ENCODE measurements at regions of chr11 and their contacts with region 1.

Region 1: GRCh38 chr11:88543902-88544655 is 206.5 kb upstream of the CTSC start:
- DNase-seq: peak; percentile 51 to 85 (median 74)
- ATAC-seq: peak; percentile 94
- H3K4me3 ChIP-seq: no peak overlapping the region
- H3K4me3 Mint-ChIP-seq: no peak overlapping the region
- H3K27ac ChIP-seq: no peak overlapping the region
- H3K27ac Mint-ChIP-seq: no peak overlapping the region
- H3K4me1 ChIP-seq: no peaks in the 10 kb centered on the region
- H3K4me1 Mint-ChIP-seq: peaks cover 2% of the 10 kb centered on the region
- H3K27me3 ChIP-seq: no peaks in the 10 kb centered on the region
- H3K27me3 Mint-ChIP-seq: no peaks in the 10 kb centered on the region
- CTCF ChIP-seq: peak; percentile 93

Region 2: DNA sequence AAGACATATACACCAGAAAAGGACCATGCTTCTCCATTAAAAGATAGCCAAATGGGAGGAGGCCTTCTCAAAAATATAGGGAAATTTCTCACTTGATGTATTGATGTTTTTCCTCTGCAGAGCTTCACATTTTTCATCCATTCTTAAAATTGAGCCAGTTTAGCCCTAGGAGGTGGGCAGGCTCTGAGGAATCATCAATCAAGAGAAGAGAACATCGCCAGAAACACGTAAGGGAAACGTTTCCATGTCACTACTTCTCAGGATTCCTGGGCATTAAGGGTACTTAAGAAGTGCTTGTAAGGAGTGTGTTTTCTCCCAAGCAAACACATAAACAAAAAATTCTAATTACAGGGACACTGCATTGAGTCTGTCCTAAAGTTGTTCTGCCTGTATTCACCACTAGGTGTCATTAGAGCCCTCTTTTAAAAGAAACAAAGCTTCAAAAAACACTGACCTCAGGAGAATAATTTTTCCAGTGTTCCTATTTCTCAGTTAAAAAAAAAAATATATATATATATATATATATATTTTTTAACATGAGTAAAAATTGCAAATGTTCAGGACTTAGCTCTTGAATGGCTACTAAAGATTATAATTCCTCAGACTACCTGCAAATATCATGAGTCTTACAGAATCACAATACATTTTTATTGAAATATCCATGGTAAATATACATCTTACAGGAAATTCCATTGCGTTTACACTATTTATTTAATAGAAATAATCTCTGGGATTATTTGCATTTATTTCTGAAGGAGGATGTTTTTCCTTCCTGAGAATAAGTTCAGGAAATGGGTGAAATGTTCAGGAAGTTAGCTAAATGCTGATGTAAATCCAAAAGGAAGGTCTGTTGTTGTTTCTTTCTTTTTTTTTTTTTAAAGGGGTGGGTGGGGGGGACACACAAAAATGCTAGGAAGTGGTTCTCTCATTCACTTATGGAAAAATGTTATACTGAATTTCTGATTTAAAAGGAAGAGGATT is 1604.9 kb before region 1 on chr11:
- CTCF ChIA-PET with region 1: no interaction called
- POLR2A ChIA-PET with region 1: no interaction called
- intact Hi-C with region 1: loop called in 1 of 2 experiments (anchors 10 kb)
- DNase-seq: peak in 2 of 9 experiments; percentile 53 to 60
- ATAC-seq: peak; percentile 52
- H3K4me3 ChIP-seq: no peak overlapping the region
- H3K4me3 Mint-ChIP-seq: no peak overlapping the region
- H3K27ac ChIP-seq: no peak overlapping the region
- H3K27ac Mint-ChIP-seq: no peak overlapping the region
- H3K4me1 ChIP-seq: no peaks in the 10 kb centered on the region
- H3K4me1 Mint-ChIP-seq: no peaks in the 10 kb centered on the region
- H3K27me3 ChIP-seq: no peaks in the 10 kb centered on the region
- H3K27me3 Mint-ChIP-seq: peaks cover 6% of the 10 kb centered on the region
- CTCF ChIP-seq: peak; percentile 72

Region 3: DNA sequence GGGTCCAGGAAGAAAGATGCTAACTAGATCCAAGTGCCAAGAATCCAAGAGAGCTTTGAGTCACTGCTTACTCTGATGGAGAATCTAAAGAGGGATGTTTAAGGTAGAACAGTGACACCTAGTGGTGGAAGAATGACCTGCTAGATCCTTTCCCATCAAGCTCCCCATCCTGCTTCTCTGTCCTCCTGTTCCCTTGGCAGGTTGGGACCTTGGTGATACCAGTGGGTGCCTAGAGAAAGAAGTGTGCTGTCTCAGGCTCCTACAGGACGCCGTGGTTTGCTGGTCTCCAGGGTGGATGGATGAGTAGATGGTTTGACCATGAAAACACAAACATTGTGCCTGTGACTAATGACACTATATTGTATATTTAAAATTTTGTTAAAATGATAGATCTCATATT is 1122.7 kb before region 1 on chr11:
- CTCF ChIA-PET with region 1: no interaction called
- POLR2A ChIA-PET with region 1: no interaction called
- intact Hi-C with region 1: loop called (anchors 5 to 10 kb)
- DNase-seq: peak in 3 of 9 experiments; percentile 23 to 69 (median 59)
- ATAC-seq: no peak
- H3K4me3 ChIP-seq: no peak overlapping the region
- H3K4me3 Mint-ChIP-seq: no peak overlapping the region
- H3K27ac ChIP-seq: no peak overlapping the region
- H3K27ac Mint-ChIP-seq: no peak overlapping the region
- H3K4me1 ChIP-seq: no peaks in the 10 kb centered on the region
- H3K4me1 Mint-ChIP-seq: no peaks in the 10 kb centered on the region
- H3K27me3 ChIP-seq: no peaks in the 10 kb centered on the region
- H3K27me3 Mint-ChIP-seq: peaks cover 2% of the 10 kb centered on the region
- CTCF ChIP-seq: peak; percentile 65

Region 4: DNA sequence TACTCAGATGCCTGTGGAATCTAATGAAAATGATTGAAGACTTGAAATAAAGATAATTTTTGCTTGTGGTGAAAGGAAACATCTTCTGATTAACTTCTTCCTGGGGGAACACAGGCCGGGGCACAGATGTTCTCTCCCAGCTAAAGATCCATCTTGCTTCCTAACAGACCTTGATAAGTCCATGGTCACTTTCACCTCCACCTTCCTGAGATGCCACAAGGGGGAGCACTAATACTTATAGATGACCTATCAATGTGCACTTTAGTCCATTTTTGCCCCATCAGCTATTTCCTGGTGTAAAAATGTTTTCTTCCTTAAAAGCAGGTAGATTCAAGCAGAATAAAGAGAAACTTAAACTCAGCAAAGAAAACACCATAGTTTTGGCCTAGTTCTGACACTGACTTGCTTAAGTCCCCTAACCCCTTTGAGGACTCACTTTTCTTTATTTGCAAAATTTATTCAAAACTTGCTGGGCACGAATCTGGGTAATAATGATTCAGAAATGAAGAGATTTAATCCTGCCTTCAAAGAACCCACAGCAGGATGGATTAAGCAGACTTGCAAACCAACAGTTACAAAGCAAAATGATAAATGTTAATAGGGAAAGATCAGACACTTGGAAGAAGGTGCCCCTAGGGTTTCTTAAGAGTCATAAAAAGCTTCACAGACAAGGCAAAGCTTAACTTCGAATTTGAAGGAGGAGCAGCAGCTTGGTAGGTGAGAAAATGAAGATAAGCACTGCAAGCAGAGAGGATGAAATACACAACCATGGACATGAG is 527.5 kb before region 1 on chr11:
- CTCF ChIA-PET with region 1: interaction called, 68 read pairs
- POLR2A ChIA-PET with region 1: no interaction called
- intact Hi-C with region 1: loop called (anchors 1 kb)
- DNase-seq: peak in 8 of 9 experiments; percentile 17 to 73 (median 52)
- ATAC-seq: peak; percentile 40
- H3K4me3 ChIP-seq: no peak overlapping the region
- H3K4me3 Mint-ChIP-seq: no peak overlapping the region
- H3K27ac ChIP-seq: no peak overlapping the region
- H3K27ac Mint-ChIP-seq: no peak overlapping the region
- H3K4me1 ChIP-seq: no peaks in the 10 kb centered on the region
- H3K4me1 Mint-ChIP-seq: no peaks in the 10 kb centered on the region
- H3K27me3 ChIP-seq: no peaks in the 10 kb centered on the region
- H3K27me3 Mint-ChIP-seq: no peaks in the 10 kb centered on the region
- CTCF ChIP-seq: peak; percentile 66

Region 5: GRCh38 chr11:88169471-88169870 is 374.6 kb before region 1 on chr11:
- CTCF ChIA-PET with region 1: no interaction called
- POLR2A ChIA-PET with region 1: no interaction called
- intact Hi-C with region 1: loop called in 1 of 2 experiments (anchors 5 kb)
- DNase-seq: no peak
- ATAC-seq: no peak
- H3K4me3 ChIP-seq: no peak overlapping the region
- H3K4me3 Mint-ChIP-seq: no peak overlapping the region
- H3K27ac ChIP-seq: no peak overlapping the region
- H3K27ac Mint-ChIP-seq: no peak overlapping the region
- H3K4me1 ChIP-seq: peaks cover 3% of the 10 kb centered on the region
- H3K4me1 Mint-ChIP-seq: peaks cover 5% of the 10 kb centered on the region
- H3K27me3 ChIP-seq: no peaks in the 10 kb centered on the region
- H3K27me3 Mint-ChIP-seq: peaks cover 8% of the 10 kb centered on the region
- CTCF ChIP-seq: no peak

Region 6: GRCh38 chr11:88529426-88529825 is 14.7 kb before region 1 on chr11:
- CTCF ChIA-PET with region 1: interaction called, 19 read pairs
- POLR2A ChIA-PET with region 1: interaction called, 3 read pairs
- intact Hi-C with region 1: no loop called
- DNase-seq: no peak
- ATAC-seq: no peak
- H3K4me3 ChIP-seq: no peak overlapping the region
- H3K4me3 Mint-ChIP-seq: no peak overlapping the region
- H3K27ac ChIP-seq: no peak overlapping the region
- H3K27ac Mint-ChIP-seq: no peak overlapping the region
- H3K4me1 ChIP-seq: no peaks in the 10 kb centered on the region
- H3K4me1 Mint-ChIP-seq: no peaks in the 10 kb centered on the region
- H3K27me3 ChIP-seq: no peaks in the 10 kb centered on the region
- H3K27me3 Mint-ChIP-seq: peaks cover 3% of the 10 kb centered on the region
- CTCF ChIP-seq: no peak